ENCODE measurements at regions of chr5 and their contacts with region 1.

Region 1: GRCh38 chr5:152379331-152379730 is 25.7 kb downstream of the NMUR2 start:
- DNase-seq: no peak
- H3K4me3 Mint-ChIP-seq: no peak overlapping the region
- H3K27ac Mint-ChIP-seq: peak overlapping the region; percentile 28
- H3K4me1 Mint-ChIP-seq: peaks cover 60% of the 10 kb centered on the region
- H3K27me3 Mint-ChIP-seq: no peaks in the 10 kb centered on the region
- CTCF ChIP-seq: no peak

Region 2: DNA sequence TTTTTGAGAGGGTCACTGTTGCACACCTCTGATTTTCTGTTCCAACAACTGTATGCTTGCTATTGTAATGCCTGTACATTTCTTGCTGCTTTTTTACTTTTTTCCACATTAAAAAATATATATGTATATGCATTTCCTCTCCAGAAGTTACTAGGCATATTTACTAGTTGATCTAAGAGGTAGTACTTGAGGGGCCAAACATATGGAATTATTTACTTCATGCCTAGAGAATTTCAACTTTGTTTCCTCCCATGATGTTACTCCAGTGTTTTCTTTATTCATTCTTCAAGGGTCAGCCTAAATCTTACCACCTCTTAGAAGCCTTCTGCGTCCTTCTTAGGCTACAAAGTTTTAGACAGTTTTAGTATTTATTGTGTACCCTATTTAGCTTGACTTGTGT is 97.0 kb before region 1 on chr5:
- CTCF ChIA-PET with region 1: no interaction called
- intact Hi-C with region 1: no loop called
- DNase-seq: no peak
- H3K4me3 Mint-ChIP-seq: no peak overlapping the region
- H3K27ac Mint-ChIP-seq: no peak overlapping the region
- H3K4me1 Mint-ChIP-seq: no peaks in the 10 kb centered on the region
- H3K27me3 Mint-ChIP-seq: no peaks in the 10 kb centered on the region
- CTCF ChIP-seq: no peak

Region 3: GRCh38 chr5:152349683-152350526 is 29.4 kb before region 1 on chr5:
- CTCF ChIA-PET with region 1: no interaction called
- intact Hi-C with region 1: no loop called
- DNase-seq: peak; percentile 77
- H3K4me3 Mint-ChIP-seq: no peak overlapping the region
- H3K27ac Mint-ChIP-seq: no peak overlapping the region
- H3K4me1 Mint-ChIP-seq: peaks cover 13% of the 10 kb centered on the region
- H3K27me3 Mint-ChIP-seq: no peaks in the 10 kb centered on the region
- CTCF ChIP-seq: peak; percentile 95

Region 4: GRCh38 chr5:152505442-152506042 is 126.2 kb after region 1 on chr5:
- CTCF ChIA-PET with region 1: interaction called, 6 read pairs
- intact Hi-C with region 1: loop called (anchors 1 kb)
- DNase-seq: peak; percentile 73
- H3K4me3 Mint-ChIP-seq: no peak overlapping the region
- H3K27ac Mint-ChIP-seq: no peak overlapping the region
- H3K4me1 Mint-ChIP-seq: peaks cover 48% of the 10 kb centered on the region
- H3K27me3 Mint-ChIP-seq: no peaks in the 10 kb centered on the region
- CTCF ChIP-seq: peak; percentile 79

Measured in Calu3 (cell line).